ENCODE measurements at regions of chr2 and their contacts with region 1.

Region 1: DNA sequence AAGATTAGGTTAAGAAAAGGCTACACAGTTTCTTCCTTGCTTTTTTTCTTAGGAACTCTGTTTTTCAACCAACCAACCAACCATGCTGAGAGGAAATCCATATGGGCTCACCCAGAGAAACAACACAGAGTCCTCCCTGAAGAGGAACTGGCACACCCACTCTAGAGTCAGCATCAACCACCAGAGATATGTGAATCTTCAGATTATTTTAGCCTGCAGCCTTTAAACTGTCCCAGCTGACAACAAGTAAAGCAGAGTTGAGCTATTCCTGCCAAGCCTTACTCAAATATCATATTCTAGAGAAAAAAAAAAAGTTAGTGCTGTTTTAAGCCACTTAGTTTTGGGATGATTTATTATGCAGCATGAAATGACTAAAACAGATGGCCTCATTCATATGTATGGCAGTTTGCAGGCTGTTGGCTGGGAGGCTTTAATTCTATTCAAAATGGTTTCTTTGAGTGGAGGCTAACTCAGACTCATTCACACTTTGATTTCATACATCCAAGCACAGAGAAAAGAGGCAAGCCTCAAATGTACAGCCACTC is 1637.7 kb upstream of the LRRTM1 start:
- DNase-seq: no peak
- ATAC-seq: no peak
- H3K4me3 ChIP-seq: no peak overlapping the region
- H3K27ac ChIP-seq: no peak overlapping the region
- H3K4me1 ChIP-seq: no peaks in the 10 kb centered on the region
- H3K27me3 ChIP-seq: no peaks in the 10 kb centered on the region
- CTCF ChIP-seq: no peak
- EP300 ChIP-seq: no peak
- POLR2A ChIP-seq: no peak
- RAD21 ChIP-seq: no peak

Region 2: DNA sequence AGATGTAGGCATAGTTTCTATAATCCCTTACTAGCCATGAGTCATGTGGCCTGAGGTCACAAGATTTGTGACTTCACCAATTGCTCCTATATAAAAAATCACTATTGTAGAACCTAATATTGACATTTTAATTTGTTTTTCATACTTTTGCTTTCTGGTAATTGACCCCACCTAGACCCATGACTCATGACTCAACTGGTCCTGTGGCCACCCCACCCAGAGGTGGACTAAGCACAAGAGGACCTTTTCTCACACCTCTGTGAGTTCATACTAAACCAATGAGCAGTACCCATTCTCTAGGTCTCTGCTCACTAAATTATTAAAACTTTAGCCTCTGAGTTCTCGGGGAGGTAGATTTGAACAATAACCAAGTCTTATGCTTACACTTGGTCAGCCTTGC is 70.2 kb before region 1 on chr2:
- CTCF ChIA-PET with region 1: no interaction called
- POLR2A ChIA-PET with region 1: no interaction called
- RAD21 ChIA-PET with region 1: no interaction called
- SMC1A ChIA-PET with region 1: no interaction called
- in situ Hi-C with region 1: no loop called
- intact Hi-C with region 1: no loop called
- DNase-seq: no peak
- ATAC-seq: no peak
- H3K4me3 ChIP-seq: no peak overlapping the region
- H3K27ac ChIP-seq: no peak overlapping the region
- H3K4me1 ChIP-seq: no peaks in the 10 kb centered on the region
- H3K27me3 ChIP-seq: no peaks in the 10 kb centered on the region
- CTCF ChIP-seq: no peak
- EP300 ChIP-seq: no peak
- POLR2A ChIP-seq: no peak
- RAD21 ChIP-seq: no peak

Region 3: DNA sequence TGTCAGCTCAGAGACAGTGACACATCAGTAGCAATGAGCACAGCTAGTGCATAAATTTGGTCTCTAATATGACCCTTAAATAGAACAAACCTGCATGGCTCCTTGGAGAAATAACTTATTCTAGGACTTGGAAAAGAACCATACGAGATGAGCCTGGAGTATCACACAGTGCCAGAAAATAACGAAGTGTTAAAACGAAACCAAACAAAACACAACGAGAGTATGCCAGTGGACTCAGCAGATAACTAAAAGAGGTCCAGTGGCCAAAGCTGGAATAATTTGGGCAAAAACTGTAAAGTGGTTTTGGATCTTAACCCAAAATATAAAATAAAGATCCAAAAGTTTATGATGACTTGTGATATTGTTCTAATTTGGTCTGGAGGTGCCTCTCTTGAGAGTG is 38.7 kb before region 1 on chr2:
- CTCF ChIA-PET with region 1: interaction called, 3 read pairs
- POLR2A ChIA-PET with region 1: no interaction called
- RAD21 ChIA-PET with region 1: no interaction called
- SMC1A ChIA-PET with region 1: interaction called, 3 read pairs
- in situ Hi-C with region 1: no loop called
- intact Hi-C with region 1: loop called (anchors 1 kb)
- DNase-seq: no peak
- ATAC-seq: peak; percentile 52
- H3K4me3 ChIP-seq: no peak overlapping the region
- H3K27ac ChIP-seq: no peak overlapping the region
- H3K4me1 ChIP-seq: no peaks in the 10 kb centered on the region
- H3K27me3 ChIP-seq: no peaks in the 10 kb centered on the region
- CTCF ChIP-seq: no peak
- EP300 ChIP-seq: no peak
- POLR2A ChIP-seq: no peak
- RAD21 ChIP-seq: no peak

Measured in GM12878 (cell line).